ENCODE measurements at regions of chr12 and their contacts with region 1.

Region 1: DNA sequence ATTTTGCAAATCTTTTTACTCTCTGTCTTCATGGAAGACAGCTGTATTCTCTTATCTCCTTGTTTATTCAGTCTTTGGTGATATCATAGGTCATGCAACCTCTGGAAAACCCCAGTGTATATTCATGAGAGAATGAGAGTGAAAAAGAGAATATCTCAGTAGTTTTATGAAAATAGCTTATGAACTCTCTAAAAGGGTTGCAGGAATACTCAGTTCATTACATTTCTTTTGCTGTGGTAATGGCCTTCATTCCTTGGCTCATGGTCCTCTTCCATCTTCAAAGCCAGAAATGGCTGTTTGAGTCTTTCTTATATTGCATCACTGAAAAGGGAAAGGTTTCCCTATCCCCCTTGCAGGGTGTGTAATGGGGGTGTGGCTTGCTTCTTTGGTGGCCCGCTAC is 150.0 kb downstream of the CCDC91 start:
- DNase-seq: no peak
- ATAC-seq: peak in 4 of 8 donors; percentile 20 to 56 (median 27)
- H3K4me3 ChIP-seq: no peak overlapping the region
- H3K27ac ChIP-seq: peak overlapping the region in 1 of 10 donors; percentile 16
- H3K4me1 ChIP-seq: peaks cover 0 to 6% (median 0%) of the 10 kb centered on the region in 9 donors
- H3K27me3 ChIP-seq: no peaks in the 10 kb centered on the region
- CTCF ChIP-seq: no peak

Region 2: DNA sequence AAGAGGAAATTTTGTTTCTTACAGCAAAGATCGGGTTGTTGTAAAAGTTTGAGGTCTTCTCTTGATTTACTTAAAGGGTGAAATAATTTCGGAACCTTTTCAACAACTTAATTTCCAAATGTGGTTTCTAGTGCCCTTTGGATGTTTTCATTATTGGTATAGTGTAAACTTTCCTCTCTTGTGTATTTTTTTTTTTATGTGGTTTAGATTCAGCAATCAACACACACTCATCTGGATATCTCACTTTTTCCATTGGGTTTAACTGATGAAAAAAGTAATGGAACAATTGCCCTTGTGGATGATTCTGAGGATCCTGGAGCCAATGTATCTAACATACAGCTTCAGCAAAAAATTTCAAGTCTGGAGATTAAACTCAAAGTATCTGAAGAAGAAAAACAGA is 33.7 kb before region 1 on chr12:
- intact Hi-C with region 1: no loop called
- DNase-seq: no peak
- ATAC-seq: no peak
- H3K4me3 ChIP-seq: no peak overlapping the region
- H3K27ac ChIP-seq: no peak overlapping the region
- H3K4me1 ChIP-seq: no peaks in the 10 kb centered on the region
- H3K27me3 ChIP-seq: no peaks in the 10 kb centered on the region
- CTCF ChIP-seq: no peak

Region 3: GRCh38 chr12:28320353-28320752 is 19.9 kb before region 1 on chr12:
- intact Hi-C with region 1: loop called in 1 of 10 experiments (anchors 2 kb)
- DNase-seq: no peak
- ATAC-seq: no peak
- H3K4me3 ChIP-seq: no peak overlapping the region
- H3K27ac ChIP-seq: no peak overlapping the region
- H3K4me1 ChIP-seq: no peaks in the 10 kb centered on the region
- H3K27me3 ChIP-seq: no peaks in the 10 kb centered on the region
- CTCF ChIP-seq: no peak

Region 4: GRCh38 chr12:28390761-28391385 is 50.6 kb after region 1 on chr12:
- intact Hi-C with region 1: loop called in 1 of 10 experiments (anchors 10 kb)
- DNase-seq: peak in 1 of 2 donors; percentile 7
- ATAC-seq: peak in 6 of 8 donors; percentile 38 to 64 (median 47)
- H3K4me3 ChIP-seq: no peak overlapping the region
- H3K27ac ChIP-seq: no peak overlapping the region
- H3K4me1 ChIP-seq: peaks cover 0 to 18% (median 6%) of the 10 kb centered on the region in 9 donors
- H3K27me3 ChIP-seq: no peaks in the 10 kb centered on the region
- CTCF ChIP-seq: no peak